Panc1 (cell line): ENCODE measurements at regions of chr2 and their contacts with region 1.

Region 1: GRCh38 chr2:167057446-167057845 is 169.2 kb downstream of the XIRP2 start:
- DNase-seq: no peak
- ATAC-seq: no peak
- H3K4me3 ChIP-seq: no peak overlapping the region
- H3K27ac ChIP-seq: no peak overlapping the region
- H3K4me1 ChIP-seq: no peaks in the 10 kb centered on the region
- H3K27me3 ChIP-seq: no peaks in the 10 kb centered on the region
- CTCF ChIP-seq: no peak

Region 2: DNA sequence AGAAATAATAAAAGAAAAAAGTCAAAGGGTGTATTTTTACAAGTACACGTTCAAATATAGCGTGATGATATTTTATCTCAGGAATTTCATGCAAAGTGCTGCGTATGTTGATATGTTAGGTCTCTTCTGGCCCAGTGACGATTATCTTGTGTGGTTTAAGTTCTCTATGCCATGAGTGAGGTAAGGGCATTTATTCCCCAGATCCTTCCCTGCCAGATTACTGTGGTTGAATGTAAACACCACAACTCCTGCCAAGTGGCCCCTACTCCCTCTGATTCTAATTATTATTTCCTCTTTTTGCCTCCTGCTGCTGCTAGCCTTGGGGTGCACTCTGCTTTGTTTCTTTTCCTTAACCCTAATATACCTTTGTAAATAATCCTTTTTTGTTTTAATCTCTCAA is 1806.1 kb before region 1 on chr2:
- CTCF ChIA-PET with region 1: no interaction called
- POLR2A ChIA-PET with region 1: no interaction called
- in situ Hi-C with region 1: no loop called
- intact Hi-C with region 1: no loop called
- DNase-seq: no peak
- ATAC-seq: no peak
- H3K4me3 ChIP-seq: no peak overlapping the region
- H3K27ac ChIP-seq: no peak overlapping the region
- H3K4me1 ChIP-seq: no peaks in the 10 kb centered on the region
- H3K27me3 ChIP-seq: no peaks in the 10 kb centered on the region
- CTCF ChIP-seq: no peak

Region 3: GRCh38 chr2:167069855-167070254 is 12.4 kb after region 1 on chr2:
- CTCF ChIA-PET with region 1: interaction called, 11 read pairs
- POLR2A ChIA-PET with region 1: no interaction called
- in situ Hi-C with region 1: no loop called
- intact Hi-C with region 1: no loop called
- DNase-seq: no peak
- ATAC-seq: no peak
- H3K4me3 ChIP-seq: no peak overlapping the region
- H3K27ac ChIP-seq: no peak overlapping the region
- H3K4me1 ChIP-seq: no peaks in the 10 kb centered on the region
- H3K27me3 ChIP-seq: no peaks in the 10 kb centered on the region
- CTCF ChIP-seq: no peak